Naive thymus-derived CD4-positive, alpha-beta T cell (primary cell): ENCODE measurements at regions of chr6 and their contacts with region 1.

Region 1: DNA sequence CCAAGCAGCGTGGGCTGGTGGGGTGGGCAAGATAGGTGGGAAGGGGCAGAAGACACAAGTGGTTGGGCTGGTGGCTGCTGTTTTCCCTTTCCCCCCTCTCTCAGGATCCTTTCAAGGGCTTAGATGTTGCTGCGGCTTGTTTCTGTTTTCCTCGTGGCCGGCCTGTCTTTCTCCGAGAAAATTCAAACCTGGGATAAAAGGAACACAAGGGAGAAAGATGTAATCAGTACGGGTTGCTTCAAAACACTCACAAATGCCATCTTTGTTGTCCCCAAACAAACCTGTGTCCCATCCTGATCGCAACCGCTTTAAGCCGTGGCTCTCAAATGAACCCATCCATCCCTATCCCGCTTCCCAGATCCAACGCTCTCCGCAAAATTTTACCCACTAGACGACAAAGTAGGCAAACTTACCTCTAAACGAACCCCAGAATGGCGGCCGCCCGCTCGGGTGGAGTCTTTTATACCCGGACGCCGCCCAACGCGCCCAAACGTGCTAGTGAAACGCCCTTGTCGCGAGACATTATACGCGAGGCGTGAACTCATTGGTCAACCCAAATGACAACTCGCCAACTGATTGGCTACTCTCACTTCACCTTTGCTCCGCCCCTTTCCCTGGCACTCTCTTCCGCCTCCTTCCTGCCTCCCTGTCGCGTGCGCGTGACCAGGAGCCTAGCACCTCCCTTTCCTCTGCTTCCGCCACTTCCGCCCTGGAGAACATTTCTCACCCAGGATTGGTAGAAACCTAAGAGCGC is at the start of gene PPP1R10:
- DNase-seq: peak; percentile 86 to 100 (median 99)
- ATAC-seq: peak; percentile 89
- H3K4me3 ChIP-seq: peak within 1 kb of the TSS; percentile 90
- H3K4me3 Mint-ChIP-seq: peak within 1 kb of the TSS; percentile 88 to 100 (median 96)
- H3K27ac ChIP-seq: peak within 1 kb of the TSS; percentile 93
- H3K27ac Mint-ChIP-seq: peak within 1 kb of the TSS; percentile 98 to 100 (median 100)
- H3K4me1 ChIP-seq: peaks cover 21 to 33% of the 10 kb centered on the region in 2 donors
- H3K4me1 Mint-ChIP-seq: peaks cover 28 to 51% (median 43%) of the 10 kb centered on the region in 7 donors
- H3K27me3 ChIP-seq: no peaks in the 10 kb centered on the region
- H3K27me3 Mint-ChIP-seq: peaks cover 0 to 14% (median 0%) of the 10 kb centered on the region in 5 donors
- total RNA-seq, gene PPP1R10: 108 to 286 (median 146) TPM

Region 2: GRCh38 chr6:30319146-30319835 is 297.7 kb before region 1 on chr6:
- CTCF ChIA-PET with region 1: no interaction called
- POLR2A ChIA-PET with region 1: no interaction called
- intact Hi-C with region 1: no loop called
- DNase-seq: no peak
- ATAC-seq: no peak
- H3K4me3 ChIP-seq: no peak overlapping the region
- H3K4me3 Mint-ChIP-seq: peak overlapping the region in 9 of 10 donors; percentile 3 to 81 (median 29)
- H3K27ac ChIP-seq: no peak overlapping the region
- H3K27ac Mint-ChIP-seq: peak overlapping the region in 6 of 9 donors; percentile 7 to 66 (median 23)
- H3K4me1 ChIP-seq: peaks cover 33 to 39% of the 10 kb centered on the region in 2 donors
- H3K4me1 Mint-ChIP-seq: peaks cover 49 to 86% (median 80%) of the 10 kb centered on the region in 7 donors
- H3K27me3 ChIP-seq: no peaks in the 10 kb centered on the region
- H3K27me3 Mint-ChIP-seq: no peaks in the 10 kb centered on the region

Region 3: DNA sequence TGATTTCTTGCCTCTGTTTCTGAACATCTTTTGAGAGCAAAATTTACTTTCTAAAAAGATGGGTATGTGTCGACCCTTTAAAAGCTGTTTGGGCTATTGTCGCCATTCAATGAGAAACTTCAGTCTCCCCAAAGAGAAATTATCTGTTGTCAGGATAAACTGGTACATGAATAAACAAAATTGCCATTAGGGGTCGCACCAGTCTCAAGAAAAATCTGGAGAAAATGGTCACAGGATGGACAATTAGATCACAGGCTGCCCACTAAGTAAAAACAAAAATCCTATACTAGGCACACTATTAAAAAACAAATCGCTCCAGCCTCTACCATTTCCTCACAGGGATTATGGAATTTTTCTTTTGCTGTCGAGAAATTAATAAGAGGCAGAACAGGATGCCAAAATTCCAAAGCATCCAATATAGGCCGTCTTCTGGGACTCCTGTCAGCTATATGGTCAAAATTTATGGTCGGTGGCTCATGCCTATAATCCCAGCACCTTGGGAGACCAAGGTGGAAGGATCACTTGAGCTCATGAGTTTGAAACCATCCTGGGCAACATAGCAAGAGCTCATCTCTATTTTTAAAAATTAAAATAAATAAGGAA is 133.2 kb before region 1 on chr6:
- CTCF ChIA-PET with region 1: interaction called, 11 read pairs
- POLR2A ChIA-PET with region 1: interaction called, 7 read pairs
- intact Hi-C with region 1: no loop called
- DNase-seq: peak in 4 of 9 donors; percentile 42 to 56 (median 54)
- ATAC-seq: no peak
- H3K4me3 ChIP-seq: no peak overlapping the region
- H3K4me3 Mint-ChIP-seq: no peak overlapping the region
- H3K27ac ChIP-seq: no peak overlapping the region
- H3K27ac Mint-ChIP-seq: peak overlapping the region in 1 of 9 donors; percentile 7
- H3K4me1 ChIP-seq: peaks cover 21 to 23% of the 10 kb centered on the region in 2 donors
- H3K4me1 Mint-ChIP-seq: peaks cover 19 to 49% (median 39%) of the 10 kb centered on the region in 7 donors
- H3K27me3 ChIP-seq: peaks cover 8 to 23% of the 10 kb centered on the region in 2 donors
- H3K27me3 Mint-ChIP-seq: peaks cover 26 to 52% (median 30%) of the 10 kb centered on the region in 5 donors

Region 4: DNA sequence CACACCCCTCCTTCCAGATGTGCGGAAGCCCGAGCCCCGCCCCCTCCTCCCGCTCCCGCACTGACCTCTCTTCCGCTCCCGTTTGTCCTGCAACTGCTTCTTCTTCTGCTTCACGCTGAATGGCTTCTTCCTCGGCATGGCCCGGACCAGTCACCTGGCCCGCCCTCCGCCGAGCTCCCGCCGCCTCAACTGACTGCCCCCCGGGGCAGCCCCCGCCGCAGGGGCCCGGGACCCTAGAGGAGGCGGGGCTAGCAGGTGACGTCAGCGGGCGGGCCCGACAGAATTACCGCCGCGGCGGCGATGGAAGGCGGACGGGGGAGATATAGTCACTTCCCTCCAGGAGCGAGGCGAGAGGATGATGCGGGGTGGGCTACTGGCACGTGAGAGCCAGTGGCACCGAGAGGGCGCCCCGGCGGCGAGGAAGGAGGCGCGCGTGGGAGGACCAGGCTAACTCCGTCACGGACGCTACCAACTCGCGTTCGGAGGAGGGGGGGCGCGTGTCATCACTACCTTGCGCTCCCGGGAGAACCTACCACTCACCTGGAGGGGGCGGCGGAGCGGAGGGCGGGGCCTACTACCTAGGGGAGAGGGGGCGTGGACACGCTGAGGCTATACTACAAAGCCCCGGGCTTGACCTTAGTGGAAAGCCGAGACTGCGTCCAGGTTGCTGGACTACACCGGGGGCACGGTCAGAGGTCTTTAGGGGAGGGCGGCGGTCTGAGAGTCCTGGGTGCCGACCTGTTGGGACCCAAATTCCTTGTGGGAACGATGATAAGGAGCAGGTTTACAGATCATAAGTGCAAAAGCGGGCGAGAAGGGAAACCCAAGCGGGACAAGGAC is 60.7 kb before region 1 on chr6 and contains the start of gene GNL1:
- CTCF ChIA-PET with region 1: interaction called, 4 read pairs
- POLR2A ChIA-PET with region 1: interaction called, 80 read pairs
- intact Hi-C with region 1: loop called (anchors 1 kb)
- DNase-seq: peak; percentile 95 to 99 (median 99)
- ATAC-seq: peak; percentile 94
- H3K4me3 ChIP-seq: peak within 1 kb of the TSS; percentile 97
- H3K4me3 Mint-ChIP-seq: peak within 1 kb of the TSS; percentile 92 to 100 (median 98)
- H3K27ac ChIP-seq: peak within 1 kb of the TSS; percentile 97
- H3K27ac Mint-ChIP-seq: peak within 1 kb of the TSS; percentile 98 to 100 (median 99)
- H3K4me1 ChIP-seq: peaks cover 8 to 19% of the 10 kb centered on the region in 2 donors
- H3K4me1 Mint-ChIP-seq: peaks cover 25 to 58% (median 45%) of the 10 kb centered on the region in 7 donors
- H3K27me3 ChIP-seq: no peaks in the 10 kb centered on the region
- H3K27me3 Mint-ChIP-seq: no peaks in the 10 kb centered on the region
- total RNA-seq, gene GNL1: 56.0 to 190 (median 73.1) TPM

Region 5: GRCh38 chr6:30672445-30673253 is 55.7 kb after region 1 on chr6 and contains the start of gene DHX16:
- CTCF ChIA-PET with region 1: interaction called, 10 read pairs
- POLR2A ChIA-PET with region 1: interaction called, 19 read pairs
- intact Hi-C with region 1: loop called (anchors 1 kb)
- DNase-seq: peak; percentile 65 to 85 (median 83)
- ATAC-seq: peak; percentile 93
- H3K4me3 ChIP-seq: peak within 1 kb of the TSS; percentile 74
- H3K4me3 Mint-ChIP-seq: peak within 1 kb of the TSS; percentile 87 to 94 (median 91)
- H3K27ac ChIP-seq: peak within 1 kb of the TSS; percentile 77
- H3K27ac Mint-ChIP-seq: peak within 1 kb of the TSS; percentile 70 to 93 (median 91)
- H3K4me1 ChIP-seq: peaks cover 8 to 15% of the 10 kb centered on the region in 2 donors
- H3K4me1 Mint-ChIP-seq: peaks cover 28 to 46% (median 43%) of the 10 kb centered on the region in 7 donors
- H3K27me3 ChIP-seq: no peaks in the 10 kb centered on the region
- H3K27me3 Mint-ChIP-seq: no peaks in the 10 kb centered on the region
- total RNA-seq, gene DHX16: 25.9 to 51.5 (median 46.7) TPM

Region 6: GRCh38 chr6:30836431-30836866 is 219.5 kb after region 1 on chr6:
- CTCF ChIA-PET with region 1: no interaction called
- POLR2A ChIA-PET with region 1: no interaction called
- intact Hi-C with region 1: no loop called
- DNase-seq: no peak
- ATAC-seq: no peak
- H3K4me3 ChIP-seq: no peak overlapping the region
- H3K4me3 Mint-ChIP-seq: no peak overlapping the region
- H3K27ac ChIP-seq: no peak overlapping the region
- H3K27ac Mint-ChIP-seq: peak overlapping the region in 1 of 9 donors; percentile 21
- H3K4me1 ChIP-seq: peaks cover 1 to 20% of the 10 kb centered on the region in 2 donors
- H3K4me1 Mint-ChIP-seq: peaks cover 25 to 58% (median 50%) of the 10 kb centered on the region in 7 donors
- H3K27me3 ChIP-seq: no peaks in the 10 kb centered on the region
- H3K27me3 Mint-ChIP-seq: no peaks in the 10 kb centered on the region

Region 7: GRCh38 chr6:30883685-30884520 is 266.9 kb after region 1 on chr6 and contains the start of gene DDR1:
- CTCF ChIA-PET with region 1: no interaction called
- POLR2A ChIA-PET with region 1: interaction called, 3 read pairs
- intact Hi-C with region 1: loop called in 1 of 2 experiments (anchors 10 kb)
- DNase-seq: peak in 6 of 9 donors; percentile 17 to 42 (median 24)
- ATAC-seq: peak; percentile 66
- H3K4me3 ChIP-seq: peak within 1 kb of the TSS; percentile 68
- H3K4me3 Mint-ChIP-seq: peak within 1 kb of the TSS; percentile 73 to 91 (median 82)
- H3K27ac ChIP-seq: peak within 1 kb of the TSS; percentile 70
- H3K27ac Mint-ChIP-seq: peak within 1 kb of the TSS; percentile 53 to 93 (median 89)
- H3K4me1 ChIP-seq: peaks cover 12 to 35% of the 10 kb centered on the region in 2 donors
- H3K4me1 Mint-ChIP-seq: peaks cover 25 to 53% (median 32%) of the 10 kb centered on the region in 7 donors
- H3K27me3 ChIP-seq: no peaks in the 10 kb centered on the region
- H3K27me3 Mint-ChIP-seq: peaks cover 0 to 7% (median 0%) of the 10 kb centered on the region in 5 donors
- total RNA-seq, gene DDR1: 13.7 to 23.8 (median 18.6) TPM

Region 8: GRCh38 chr6:31619805-31620585 is 1003.0 kb after region 1 on chr6:
- CTCF ChIA-PET with region 1: no interaction called
- POLR2A ChIA-PET with region 1: no interaction called
- intact Hi-C with region 1: loop called in 1 of 2 experiments (anchors 2 kb)
- DNase-seq: peak; percentile 81 to 97 (median 94)
- ATAC-seq: peak; percentile 88
- H3K4me3 ChIP-seq: peak overlapping the region; percentile 90
- H3K4me3 Mint-ChIP-seq: peak overlapping the region; percentile 87 to 97 (median 93)
- H3K27ac ChIP-seq: peak overlapping the region; percentile 96
- H3K27ac Mint-ChIP-seq: peak overlapping the region; percentile 95 to 99 (median 96)
- H3K4me1 ChIP-seq: peaks cover 14 to 23% of the 10 kb centered on the region in 2 donors
- H3K4me1 Mint-ChIP-seq: peaks cover 26 to 60% (median 53%) of the 10 kb centered on the region in 7 donors
- H3K27me3 ChIP-seq: no peaks in the 10 kb centered on the region
- H3K27me3 Mint-ChIP-seq: no peaks in the 10 kb centered on the region